ENCODE measurements at regions of chr7 and their contacts with region 1.

Region 1: DNA sequence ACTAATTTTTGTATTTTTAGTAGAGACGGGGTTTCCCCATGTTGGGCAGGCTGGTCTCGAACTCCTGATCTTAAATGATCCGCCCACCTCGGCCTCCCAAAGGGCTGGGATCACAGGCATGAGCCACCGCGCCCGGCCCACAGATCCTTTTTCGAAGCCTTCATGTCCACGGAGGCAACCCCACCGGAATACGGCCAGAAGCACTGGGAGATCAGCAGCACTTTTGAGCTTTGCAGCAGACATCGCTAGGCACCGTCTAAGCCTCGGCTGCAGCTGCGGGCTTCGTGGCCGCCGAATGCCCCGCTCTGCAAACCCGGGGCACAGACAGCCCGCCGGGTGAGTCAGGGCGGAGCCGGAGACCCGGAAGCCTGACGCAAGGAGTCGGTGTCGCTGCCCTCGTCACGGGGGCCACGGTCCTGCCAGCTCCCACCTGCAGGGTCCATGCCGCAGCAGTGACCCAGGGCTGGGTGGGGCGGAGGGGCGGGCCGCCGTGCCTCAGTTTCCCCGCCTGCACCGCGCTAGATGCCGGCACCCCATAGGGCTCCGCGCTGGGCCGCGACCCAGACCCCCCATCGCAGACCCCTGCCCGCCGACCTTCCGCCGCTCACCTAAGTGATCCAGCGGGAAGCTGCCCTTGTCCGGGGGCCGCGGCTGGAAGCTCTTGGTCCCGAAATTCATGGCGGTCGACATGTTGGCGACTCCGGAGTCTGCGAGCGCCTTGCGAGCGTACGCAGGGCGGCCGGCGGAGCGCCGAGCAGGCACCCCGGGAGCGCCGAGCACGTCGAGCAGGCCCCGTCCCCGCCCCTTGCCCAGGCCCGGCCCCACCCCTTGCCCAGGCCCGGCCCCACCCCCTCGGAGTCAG is at the start of gene COX19:
- DNase-seq: peak; percentile 85
- H3K4me3 Mint-ChIP-seq: peak within 1 kb of the TSS; percentile 97
- H3K27ac Mint-ChIP-seq: peak within 1 kb of the TSS; percentile 94
- H3K4me1 Mint-ChIP-seq: peaks cover 5% of the 10 kb centered on the region
- H3K27me3 Mint-ChIP-seq: no peaks in the 10 kb centered on the region
- total RNA-seq, gene COX19: 14.3 and 18.6 TPM in 2 replicates

Region 2: DNA sequence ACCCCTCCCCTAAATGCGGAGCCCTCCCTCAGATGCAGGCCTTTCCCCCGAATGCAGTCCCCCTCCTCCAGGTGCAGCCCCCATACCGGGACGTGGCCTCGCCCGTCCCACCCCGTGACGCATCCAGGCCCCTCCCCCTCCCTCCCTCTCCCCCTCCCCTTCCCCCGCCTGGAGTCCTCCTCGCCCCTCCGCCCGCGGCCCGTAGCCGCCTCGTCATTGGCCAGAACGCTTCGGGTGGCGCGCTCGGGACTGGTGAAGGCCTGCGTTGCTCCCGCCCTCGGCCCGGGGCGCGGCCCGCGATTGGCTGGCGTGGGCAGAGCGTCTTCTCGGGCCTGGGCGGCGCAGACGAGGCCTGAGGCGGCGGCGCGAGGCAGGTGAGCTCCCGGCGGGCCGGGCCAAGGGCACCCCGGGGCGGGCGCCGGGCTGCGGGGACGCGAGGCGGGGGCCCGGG is 158.7 kb before region 1 on chr7:
- intact Hi-C with region 1: loop called (anchors 1 kb)
- DNase-seq: peak; percentile 96
- H3K4me3 Mint-ChIP-seq: no peak overlapping the region
- H3K27ac Mint-ChIP-seq: no peak overlapping the region
- H3K4me1 Mint-ChIP-seq: peaks cover 55% of the 10 kb centered on the region
- H3K27me3 Mint-ChIP-seq: peaks cover 19% of the 10 kb centered on the region

Region 3: GRCh38 chr7:909358-910329 is 65.4 kb before region 1 on chr7:
- intact Hi-C with region 1: loop called (anchors 1 kb)
- DNase-seq: no peak
- H3K4me3 Mint-ChIP-seq: no peak overlapping the region
- H3K27ac Mint-ChIP-seq: no peak overlapping the region
- H3K4me1 Mint-ChIP-seq: no peaks in the 10 kb centered on the region
- H3K27me3 Mint-ChIP-seq: peaks cover 5% of the 10 kb centered on the region

Region 4: DNA sequence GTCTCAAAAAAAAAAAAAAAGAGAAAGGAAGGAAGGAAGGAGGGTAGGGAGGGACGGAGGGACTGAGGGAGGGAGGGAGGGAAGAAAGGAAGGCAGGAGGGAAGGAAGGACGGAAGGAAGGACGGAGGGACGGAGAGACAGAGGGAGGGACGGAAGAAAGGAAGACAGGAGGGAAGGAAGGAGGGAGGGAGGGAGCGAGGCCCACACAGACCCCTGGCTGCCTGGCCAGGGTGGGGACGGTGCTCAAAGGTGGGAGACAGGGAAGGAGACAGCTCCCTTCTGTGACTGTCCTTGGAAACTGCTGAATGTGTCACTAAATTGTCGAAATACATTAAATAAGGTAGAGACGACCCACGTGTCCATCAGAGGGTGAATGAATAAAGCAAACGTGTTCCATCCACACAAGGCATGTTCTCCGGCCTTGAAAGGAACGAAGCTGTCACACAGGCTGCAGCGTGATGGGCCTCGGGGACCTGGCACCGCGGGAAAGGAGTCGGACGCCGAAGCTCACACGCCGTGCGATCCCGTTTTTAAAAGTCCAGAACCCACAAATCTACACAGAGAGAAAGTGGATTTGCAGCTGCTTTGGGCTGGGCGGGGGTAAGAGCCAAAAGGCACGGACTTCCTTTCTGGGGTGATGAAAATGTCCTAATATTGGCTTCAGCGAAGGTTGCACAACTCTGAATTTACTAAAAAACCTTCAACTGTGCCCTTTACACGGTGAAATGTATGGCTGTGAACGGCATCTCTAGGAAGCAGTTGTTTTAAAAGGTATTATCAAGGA is 43.9 kb before region 1 on chr7:
- intact Hi-C with region 1: loop called (anchors 2 kb)
- DNase-seq: no peak
- H3K4me3 Mint-ChIP-seq: no peak overlapping the region
- H3K27ac Mint-ChIP-seq: peak overlapping the region; percentile 58
- H3K4me1 Mint-ChIP-seq: peaks cover 22% of the 10 kb centered on the region
- H3K27me3 Mint-ChIP-seq: no peaks in the 10 kb centered on the region

Region 5: GRCh38 chr7:963307-964078 is 11.6 kb before region 1 on chr7:
- intact Hi-C with region 1: no loop called
- DNase-seq: no peak
- H3K4me3 Mint-ChIP-seq: no peak overlapping the region
- H3K27ac Mint-ChIP-seq: no peak overlapping the region
- H3K4me1 Mint-ChIP-seq: no peaks in the 10 kb centered on the region
- H3K27me3 Mint-ChIP-seq: peaks cover 2% of the 10 kb centered on the region

Region 6: DNA sequence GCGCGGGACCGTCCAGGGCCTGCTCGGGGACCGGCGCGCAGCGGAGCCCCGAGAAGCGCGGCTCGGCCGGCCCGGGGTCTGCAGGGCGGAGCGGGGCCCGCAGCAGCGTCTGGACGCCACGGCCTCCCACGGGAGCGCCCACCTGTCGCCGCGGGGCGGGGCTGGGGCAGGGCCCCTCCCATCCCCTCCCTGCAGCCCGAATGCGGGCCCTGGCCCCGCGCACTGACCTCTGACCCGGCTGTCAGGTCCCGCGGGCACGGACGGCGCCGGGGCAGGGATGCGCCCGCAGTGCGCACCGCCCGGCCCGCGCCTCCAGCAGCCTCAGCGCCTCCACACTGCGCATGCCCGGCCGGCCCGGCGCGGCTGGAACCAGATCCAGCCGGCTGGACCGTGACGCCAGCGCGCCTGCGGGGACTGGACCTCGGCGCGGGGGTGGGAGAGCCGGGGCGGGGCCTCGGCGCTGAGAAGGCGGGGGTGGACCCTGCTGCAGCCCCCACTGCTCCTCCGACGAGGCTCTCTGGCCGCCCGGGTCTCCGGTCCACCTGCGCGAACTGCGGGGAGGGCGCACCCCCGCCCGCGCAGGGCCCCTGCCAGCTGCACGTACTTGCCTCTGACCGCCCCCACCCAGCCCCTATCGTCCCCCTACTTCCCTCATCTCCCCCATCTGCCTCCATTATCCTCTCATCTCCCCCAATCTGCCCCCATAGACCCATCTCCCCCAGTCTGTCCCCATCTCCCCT is 53.1 kb after region 1 on chr7:
- intact Hi-C with region 1: loop called (anchors 1 kb)
- DNase-seq: peak; percentile 82
- H3K4me3 Mint-ChIP-seq: peak overlapping the region; percentile 82
- H3K27ac Mint-ChIP-seq: peak overlapping the region; percentile 91
- H3K4me1 Mint-ChIP-seq: peaks cover 17% of the 10 kb centered on the region
- H3K27me3 Mint-ChIP-seq: no peaks in the 10 kb centered on the region

Region 7: DNA sequence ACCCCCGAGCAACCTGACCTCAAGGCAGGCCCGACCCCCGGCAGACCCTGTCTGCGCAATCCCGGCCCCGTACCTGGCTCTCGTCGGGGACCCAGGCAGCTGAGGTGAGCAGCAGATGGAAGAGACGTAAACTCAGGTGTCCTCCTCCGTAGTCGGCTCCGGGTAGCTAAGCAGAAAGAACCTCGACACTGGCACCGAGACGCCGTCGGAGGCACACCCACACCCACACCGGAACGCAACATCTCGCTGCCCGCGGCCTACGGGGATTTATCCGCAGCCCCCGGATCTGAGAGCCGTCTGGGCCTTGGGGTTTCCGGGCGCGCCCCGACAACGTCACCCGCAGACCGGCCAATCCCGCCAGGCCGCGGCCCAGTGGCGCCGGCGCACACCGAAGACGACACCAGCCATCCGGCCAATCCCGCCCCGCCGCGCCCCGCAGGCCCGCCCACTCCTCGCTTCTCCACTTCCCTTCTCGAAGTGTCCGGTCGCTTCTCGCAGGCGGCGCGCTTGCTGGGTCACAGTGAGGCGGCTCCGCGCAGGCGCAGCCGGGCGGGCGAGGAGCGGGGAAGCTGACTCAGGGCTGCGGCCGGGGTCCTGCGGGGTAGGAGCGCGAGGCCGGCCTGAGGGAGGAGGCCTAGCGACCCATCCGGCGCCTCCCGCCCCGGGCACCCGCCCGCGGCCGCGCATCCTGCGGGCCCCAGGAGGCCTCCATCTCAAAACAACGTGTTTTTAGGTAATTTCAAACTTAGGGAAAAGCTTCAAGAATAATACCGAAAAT is 185.0 kb after region 1 on chr7 and contains the start of gene ZFAND2A:
- intact Hi-C with region 1: loop called (anchors 10 kb)
- DNase-seq: peak; percentile 99
- H3K4me3 Mint-ChIP-seq: peak within 1 kb of the TSS; percentile 93
- H3K27ac Mint-ChIP-seq: peak within 1 kb of the TSS; percentile 80
- H3K4me1 Mint-ChIP-seq: peaks cover 28% of the 10 kb centered on the region
- H3K27me3 Mint-ChIP-seq: no peaks in the 10 kb centered on the region
- total RNA-seq, gene ZFAND2A: 21.2 and 21.9 TPM in 2 replicates

Region 8: GRCh38 chr7:1275451-1276381 is 300.7 kb after region 1 on chr7:
- intact Hi-C with region 1: no loop called
- DNase-seq: no peak
- H3K4me3 Mint-ChIP-seq: no peak overlapping the region
- H3K27ac Mint-ChIP-seq: no peak overlapping the region
- H3K4me1 Mint-ChIP-seq: no peaks in the 10 kb centered on the region
- H3K27me3 Mint-ChIP-seq: peaks cover 2% of the 10 kb centered on the region